Cardiac septum (tissue), 1 donor: ENCODE measurements at regions of chr4 and their contacts with region 1.

Region 1: GRCh38 chr4:4488405-4489404 is 53.1 kb downstream of the STX18 start:
- DNase-seq: no peak

Region 2: GRCh38 chr4:4344915-4345527 is 143.7 kb before region 1 on chr4:
- intact Hi-C with region 1: no loop called
- DNase-seq: no peak

Region 3: DNA sequence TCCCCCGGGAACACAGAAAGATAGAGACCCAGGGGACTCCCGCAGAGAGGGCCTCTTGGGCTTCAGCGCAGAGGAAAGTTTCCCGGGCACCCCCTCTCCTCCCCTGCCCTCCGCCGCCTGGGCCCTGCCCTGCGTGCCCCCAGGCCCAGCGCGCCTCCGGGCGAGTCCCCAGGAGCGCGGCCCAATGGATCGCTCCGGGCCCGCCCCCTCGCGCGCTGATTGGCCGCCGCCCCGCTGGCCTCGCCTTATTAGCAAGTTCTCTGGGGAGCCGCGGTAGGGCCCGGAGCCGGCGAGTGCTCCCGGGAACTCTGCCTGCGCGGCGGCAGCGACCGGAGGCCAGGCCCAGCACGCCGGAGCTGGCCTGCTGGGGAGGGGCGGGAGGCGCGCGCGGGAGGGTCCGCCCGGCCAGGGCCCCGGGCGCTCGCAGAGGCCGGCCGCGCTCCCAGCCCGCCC is 370.7 kb after region 1 on chr4 and contains the start of gene MSX1:
- intact Hi-C with region 1: loop called (anchors 10 kb)
- DNase-seq: peak; percentile 92
- total RNA-seq, gene MSX1: 5.0 TPM

Region 4: GRCh38 chr4:4875147-4875546 is 386.4 kb after region 1 on chr4:
- intact Hi-C with region 1: loop called (anchors 5 kb)
- DNase-seq: no peak